ENCODE measurements at regions of chr15 and their contacts with region 1.

Region 1: DNA sequence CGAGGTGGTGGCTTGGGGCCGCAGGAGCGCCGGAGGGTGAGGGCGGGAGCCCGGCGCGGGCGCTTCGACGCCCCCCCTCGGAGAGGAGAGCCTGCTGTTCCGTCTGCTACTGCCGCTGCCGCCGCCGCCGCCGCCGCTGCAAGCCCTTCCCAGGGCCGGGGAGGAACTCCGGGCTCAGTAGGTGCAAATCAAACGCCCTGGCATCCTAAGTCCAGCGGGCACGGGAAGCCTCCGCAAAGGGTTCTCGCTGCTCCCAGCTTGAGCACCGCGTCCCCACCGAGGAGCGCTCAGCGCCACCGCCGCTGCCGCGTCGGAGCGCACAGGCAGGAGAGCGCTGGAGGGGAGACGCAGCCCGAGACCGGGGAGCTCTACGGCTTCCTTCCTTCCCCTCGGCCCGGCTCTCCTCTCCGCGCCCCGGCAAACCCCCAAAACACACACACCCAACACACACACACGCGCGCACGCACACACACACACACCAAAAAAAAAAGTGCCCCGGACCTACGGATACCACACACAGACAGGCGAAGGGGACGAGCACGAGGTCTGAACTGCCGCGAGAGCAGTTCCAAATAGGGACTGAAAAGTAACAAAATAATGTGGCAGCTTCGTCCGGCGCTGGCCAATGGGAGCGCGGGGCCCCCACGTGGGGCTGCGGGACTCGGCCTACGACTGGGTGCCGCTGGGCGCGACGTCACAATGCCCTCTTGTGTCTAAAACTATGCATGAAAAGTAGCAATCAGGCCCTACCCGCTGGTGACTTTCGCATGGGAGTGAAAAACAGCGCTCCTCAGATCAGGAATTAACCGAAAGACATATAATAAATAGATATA is at the start of gene TLE3:
- DNase-seq: peak; percentile 96
- ATAC-seq: peak; percentile 56
- H3K4me3 Mint-ChIP-seq: peak within 1 kb of the TSS; percentile 98
- H3K27ac Mint-ChIP-seq: peak within 1 kb of the TSS; percentile 97
- H3K4me1 Mint-ChIP-seq: peaks cover 60% of the 10 kb centered on the region
- H3K27me3 Mint-ChIP-seq: peaks cover 2% of the 10 kb centered on the region
- CTCF ChIP-seq: no peak
- total RNA-seq, gene TLE3: 106 and 110 TPM in 2 replicates

Region 2: GRCh38 chr15:69475769-69476358 is 621.7 kb before region 1 on chr15:
- CTCF ChIA-PET with region 1: no interaction called
- POLR2A ChIA-PET with region 1: no interaction called
- intact Hi-C with region 1: loop called (anchors 5 kb)
- DNase-seq: peak; percentile 65
- ATAC-seq: peak; percentile 88
- H3K4me3 Mint-ChIP-seq: no peak overlapping the region
- H3K27ac Mint-ChIP-seq: no peak overlapping the region
- H3K4me1 Mint-ChIP-seq: peaks cover 3% of the 10 kb centered on the region
- H3K27me3 Mint-ChIP-seq: peaks cover 6% of the 10 kb centered on the region
- CTCF ChIP-seq: no peak

Region 3: GRCh38 chr15:69749797-69750196 is 347.8 kb before region 1 on chr15:
- CTCF ChIA-PET with region 1: interaction called, 5 read pairs
- POLR2A ChIA-PET with region 1: interaction called, 11 read pairs
- intact Hi-C with region 1: no loop called
- DNase-seq: no peak
- ATAC-seq: peak; percentile 28
- H3K4me3 Mint-ChIP-seq: no peak overlapping the region
- H3K27ac Mint-ChIP-seq: no peak overlapping the region
- H3K4me1 Mint-ChIP-seq: peaks cover 26% of the 10 kb centered on the region
- H3K27me3 Mint-ChIP-seq: peaks cover 11% of the 10 kb centered on the region
- CTCF ChIP-seq: no peak

Region 4: GRCh38 chr15:70014860-70015490 is 82.6 kb before region 1 on chr15:
- CTCF ChIA-PET with region 1: no interaction called
- POLR2A ChIA-PET with region 1: interaction called, 9 read pairs
- intact Hi-C with region 1: loop called (anchors 2 kb)
- DNase-seq: peak; percentile 50
- ATAC-seq: peak; percentile 70
- H3K4me3 Mint-ChIP-seq: peak overlapping the region; percentile 58
- H3K27ac Mint-ChIP-seq: peak overlapping the region; percentile 77
- H3K4me1 Mint-ChIP-seq: peaks cover 84% of the 10 kb centered on the region
- H3K27me3 Mint-ChIP-seq: no peaks in the 10 kb centered on the region
- CTCF ChIP-seq: no peak

Region 5: DNA sequence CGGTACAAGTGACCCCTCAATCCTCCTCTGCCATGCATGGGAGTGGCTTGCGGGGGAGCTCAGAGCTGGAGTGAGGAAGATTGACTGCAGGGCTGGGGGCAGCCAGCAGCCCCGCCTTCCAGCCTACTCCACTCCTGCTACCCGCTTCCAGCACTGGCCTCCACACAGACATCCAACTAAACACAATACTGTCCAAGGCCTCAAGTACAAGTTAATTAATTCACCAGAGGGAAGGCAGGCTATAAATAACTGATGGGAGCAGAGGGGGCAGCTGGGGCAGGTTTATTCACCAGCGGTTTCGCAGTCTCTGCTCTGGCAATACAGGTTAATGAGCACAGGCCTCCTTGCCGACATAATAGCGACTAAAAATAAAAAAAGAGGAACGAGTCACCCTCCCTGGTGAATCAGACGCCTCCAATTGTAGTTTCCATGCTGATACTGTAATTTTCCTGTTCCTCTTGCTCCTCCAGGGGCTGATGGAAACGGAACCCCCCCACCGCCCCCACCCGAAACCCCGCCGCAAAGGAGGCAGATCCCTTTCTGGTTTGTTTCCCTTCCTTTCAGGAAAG is 166.5 kb after region 1 on chr15:
- CTCF ChIA-PET with region 1: interaction called, 3 read pairs
- POLR2A ChIA-PET with region 1: interaction called, 30 read pairs
- intact Hi-C with region 1: loop called (anchors 1 kb)
- DNase-seq: no peak
- ATAC-seq: peak; percentile 51
- H3K4me3 Mint-ChIP-seq: peak overlapping the region; percentile 57
- H3K27ac Mint-ChIP-seq: peak overlapping the region; percentile 18
- H3K4me1 Mint-ChIP-seq: peaks cover 92% of the 10 kb centered on the region
- H3K27me3 Mint-ChIP-seq: no peaks in the 10 kb centered on the region
- CTCF ChIP-seq: no peak

Region 6: DNA sequence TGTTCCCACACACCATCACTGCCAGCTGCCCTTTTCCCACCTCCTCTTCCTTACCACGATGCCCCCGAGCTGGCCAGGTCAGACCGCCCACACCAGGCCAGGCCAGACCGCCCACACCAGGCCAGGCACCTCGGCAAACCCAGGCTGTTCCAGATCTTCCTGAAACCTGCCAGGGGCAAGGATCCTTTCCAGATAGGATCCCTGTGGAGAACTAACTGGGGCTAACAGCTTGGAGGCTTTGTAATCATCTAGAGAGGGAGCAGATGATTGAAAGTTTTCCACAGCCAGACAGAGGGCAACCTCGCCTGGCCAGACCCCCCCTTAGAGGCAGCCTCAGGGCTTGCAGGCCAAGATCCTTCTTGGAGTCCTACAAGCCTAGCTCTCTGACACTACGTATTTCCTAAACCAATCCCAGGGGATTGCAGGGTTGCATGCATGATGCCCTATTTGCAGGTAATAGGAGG is 287.6 kb after region 1 on chr15:
- CTCF ChIA-PET with region 1: no interaction called
- POLR2A ChIA-PET with region 1: interaction called, 10 read pairs
- intact Hi-C with region 1: loop called (anchors 1 kb)
- DNase-seq: no peak
- ATAC-seq: no peak
- H3K4me3 Mint-ChIP-seq: no peak overlapping the region
- H3K27ac Mint-ChIP-seq: no peak overlapping the region
- H3K4me1 Mint-ChIP-seq: peaks cover 24% of the 10 kb centered on the region
- H3K27me3 Mint-ChIP-seq: no peaks in the 10 kb centered on the region
- CTCF ChIP-seq: no peak

Region 7: GRCh38 chr15:70528270-70528706 is 430.7 kb after region 1 on chr15:
- CTCF ChIA-PET with region 1: no interaction called
- POLR2A ChIA-PET with region 1: interaction called, 4 read pairs
- intact Hi-C with region 1: loop called (anchors 1 kb)
- DNase-seq: peak; percentile 30
- ATAC-seq: peak; percentile 72
- H3K4me3 Mint-ChIP-seq: peak overlapping the region; percentile 47
- H3K27ac Mint-ChIP-seq: peak overlapping the region; percentile 85
- H3K4me1 Mint-ChIP-seq: peaks cover 48% of the 10 kb centered on the region
- H3K27me3 Mint-ChIP-seq: no peaks in the 10 kb centered on the region
- CTCF ChIP-seq: no peak

Region 8: DNA sequence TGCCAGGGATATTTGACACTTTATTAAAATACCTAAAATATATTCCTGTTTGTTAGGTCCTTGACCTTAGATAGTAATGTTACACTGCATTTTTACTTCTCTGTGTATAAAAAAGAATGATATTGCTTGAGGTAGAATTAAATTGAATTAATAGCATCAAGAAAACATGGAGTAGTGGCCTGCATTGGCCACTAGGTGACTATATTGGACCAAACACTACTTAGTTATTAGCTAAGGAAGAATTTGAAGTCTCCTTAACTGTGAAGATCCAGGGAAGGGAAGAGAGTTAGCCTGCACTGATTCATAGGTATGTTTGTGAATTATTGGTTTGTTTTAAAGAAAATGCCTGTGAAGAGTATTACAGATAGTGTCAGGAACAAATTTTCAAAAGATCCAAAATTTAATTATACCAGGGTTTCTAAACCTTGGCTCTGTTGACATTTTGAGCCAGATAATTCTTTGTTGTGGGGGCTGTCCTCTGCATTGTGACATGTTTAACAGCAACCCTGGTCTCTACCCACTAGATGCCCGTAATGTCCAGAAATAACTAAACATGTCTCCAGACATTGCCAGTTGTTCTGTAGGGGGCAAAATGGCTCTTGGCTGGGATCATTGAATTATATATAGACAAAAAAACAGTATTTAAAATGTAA is 914.1 kb after region 1 on chr15:
- CTCF ChIA-PET with region 1: no interaction called
- POLR2A ChIA-PET with region 1: no interaction called
- intact Hi-C with region 1: no loop called
- DNase-seq: no peak
- ATAC-seq: no peak
- H3K4me3 Mint-ChIP-seq: no peak overlapping the region
- H3K27ac Mint-ChIP-seq: no peak overlapping the region
- H3K4me1 Mint-ChIP-seq: no peaks in the 10 kb centered on the region
- H3K27me3 Mint-ChIP-seq: peaks cover 13% of the 10 kb centered on the region
- CTCF ChIP-seq: no peak

Measured in activated B cell treated with CpG ODN at 0.5 μM for 24 hours (primary cell).